MCF 10A (cell line): ENCODE measurements at regions of chr13 and their contacts with region 1.

Region 1: GRCh38 chr13:44710576-44710975 is 134.4 kb upstream of the TSC22D1 start:
- DNase-seq: peak; percentile 90
- H3K4me3 Mint-ChIP-seq: no peak overlapping the region
- H3K27ac Mint-ChIP-seq: peak overlapping the region; percentile 75
- H3K4me1 Mint-ChIP-seq: peaks cover 35% of the 10 kb centered on the region
- H3K27me3 Mint-ChIP-seq: no peaks in the 10 kb centered on the region
- CTCF ChIP-seq: no peak

Region 2: GRCh38 chr13:44726214-44726613 is 15.6 kb after region 1 on chr13:
- CTCF ChIA-PET with region 1: interaction called, 4 read pairs
- POLR2A ChIA-PET with region 1: interaction called, 29 read pairs
- intact Hi-C with region 1: no loop called
- DNase-seq: peak; percentile 76
- H3K4me3 Mint-ChIP-seq: no peak overlapping the region
- H3K27ac Mint-ChIP-seq: peak overlapping the region; percentile 89
- H3K4me1 Mint-ChIP-seq: peaks cover 20% of the 10 kb centered on the region
- H3K27me3 Mint-ChIP-seq: no peaks in the 10 kb centered on the region
- CTCF ChIP-seq: no peak

Region 3: GRCh38 chr13:44815623-44816022 is 105.0 kb after region 1 on chr13:
- CTCF ChIA-PET with region 1: no interaction called
- POLR2A ChIA-PET with region 1: interaction called, 7 read pairs
- intact Hi-C with region 1: loop called (anchors 5 kb)
- DNase-seq: peak; percentile 93
- H3K4me3 Mint-ChIP-seq: no peak overlapping the region
- H3K27ac Mint-ChIP-seq: peak overlapping the region; percentile 37
- H3K4me1 Mint-ChIP-seq: peaks cover 45% of the 10 kb centered on the region
- H3K27me3 Mint-ChIP-seq: no peaks in the 10 kb centered on the region
- CTCF ChIP-seq: no peak